Mammary epithelial cell (primary cell): ENCODE measurements at regions of chr6 and their contacts with region 1.

Region 1: GRCh38 chr6:46042355-46042999 is 26.8 kb upstream of the CLIC5 start:
- DNase-seq: peak; percentile 48
- H3K4me3 ChIP-seq: no peak overlapping the region
- H3K27ac ChIP-seq: no peak overlapping the region
- H3K4me1 ChIP-seq: no peaks in the 10 kb centered on the region
- H3K27me3 ChIP-seq: peaks cover 2% of the 10 kb centered on the region
- CTCF ChIP-seq: peak; percentile 73 to 75

Region 2: DNA sequence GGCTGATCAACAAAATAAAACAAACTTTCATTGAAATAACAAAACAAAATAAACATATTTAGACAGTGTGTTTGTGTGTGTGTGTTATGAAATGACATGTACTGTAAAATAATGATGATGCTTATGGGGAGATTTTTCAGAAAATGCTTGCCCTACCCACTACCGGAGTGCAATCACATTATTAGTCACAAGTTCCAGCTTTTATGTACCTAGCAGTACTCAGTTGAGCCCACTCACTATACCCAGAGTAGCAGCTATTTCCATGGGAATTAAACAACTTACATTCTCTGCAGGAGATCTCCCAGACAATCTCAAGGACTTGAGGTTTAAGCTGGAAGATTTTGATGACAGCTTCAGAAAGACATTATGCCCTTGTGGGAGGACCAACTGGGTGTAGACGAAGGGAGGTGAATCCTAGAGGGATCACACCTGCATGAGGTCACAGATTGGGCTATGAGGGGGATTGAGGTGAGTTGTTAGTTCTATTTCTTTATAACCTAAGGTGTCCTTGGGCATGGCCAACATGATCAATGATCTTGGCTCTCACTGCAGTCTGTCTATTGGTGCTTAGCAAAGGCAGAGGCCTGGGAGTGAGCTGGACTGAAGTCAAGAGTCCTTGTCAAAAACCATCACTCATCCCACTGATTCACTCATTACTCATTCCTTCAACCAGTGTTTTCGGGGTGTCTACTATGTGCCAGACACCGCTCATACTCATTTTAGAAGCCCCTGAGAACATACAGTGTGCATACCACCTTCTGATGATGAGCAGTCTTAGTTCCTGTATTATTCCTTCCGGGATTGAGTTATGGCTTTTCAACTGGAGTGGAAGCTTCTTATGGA is 20.1 kb before region 1 on chr6:
- CTCF ChIA-PET with region 1: interaction called, 14 read pairs
- dilution Hi-C with region 1: no loop called
- in situ Hi-C with region 1: no loop called
- intact Hi-C with region 1: no loop called
- DNase-seq: no peak
- H3K4me3 ChIP-seq: no peak overlapping the region
- H3K27ac ChIP-seq: no peak overlapping the region
- H3K4me1 ChIP-seq: no peaks in the 10 kb centered on the region
- H3K27me3 ChIP-seq: peaks cover 2% of the 10 kb centered on the region
- CTCF ChIP-seq: no peak

Region 3: DNA sequence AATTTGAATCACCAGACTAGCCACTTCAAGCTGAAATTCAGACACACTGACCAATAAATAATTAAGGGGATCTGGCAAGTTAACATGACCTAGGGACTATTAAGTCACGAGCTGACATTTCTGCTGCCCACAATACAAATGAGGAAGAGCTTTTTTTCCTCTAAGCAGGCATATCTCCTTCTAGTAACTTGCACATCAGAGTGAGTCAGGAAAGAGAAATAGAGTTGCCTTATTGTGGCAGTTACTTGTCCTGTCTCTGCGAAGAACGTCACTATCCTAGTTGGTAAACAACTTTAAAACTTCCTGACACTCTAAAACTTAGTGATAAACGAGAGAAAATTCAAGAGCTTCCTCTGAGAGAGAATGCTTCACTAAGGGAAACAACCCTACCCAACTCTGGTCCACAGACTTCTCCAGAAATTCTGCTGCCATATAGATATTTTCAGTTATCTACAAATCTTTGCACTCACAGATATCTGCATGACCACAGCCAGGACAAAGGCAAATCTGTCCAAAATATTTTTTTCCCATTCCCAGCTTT is 688.5 kb after region 1 on chr6:
- CTCF ChIA-PET with region 1: no interaction called
- dilution Hi-C with region 1: no loop called
- in situ Hi-C with region 1: no loop called
- intact Hi-C with region 1: no loop called
- DNase-seq: no peak
- H3K4me3 ChIP-seq: no peak overlapping the region
- H3K27ac ChIP-seq: no peak overlapping the region
- H3K4me1 ChIP-seq: peaks cover 24% of the 10 kb centered on the region
- H3K27me3 ChIP-seq: no peaks in the 10 kb centered on the region
- CTCF ChIP-seq: no peak